ENCODE measurements at regions of chr17 and their contacts with region 1.

Region 1: GRCh38 chr17:41655611-41656351 is 31.4 kb upstream of the KRT17 start:
- DNase-seq: peak; percentile 99
- H3K4me3 ChIP-seq: peak overlapping the region in 2 of 3 donors; percentile 15 to 49
- H3K27ac ChIP-seq: peak overlapping the region; percentile 97 to 100
- H3K4me1 ChIP-seq: peaks cover 47 to 75% of the 10 kb centered on the region in 2 donors
- H3K27me3 ChIP-seq: no peaks in the 10 kb centered on the region
- CTCF ChIP-seq: no peak
- POLR2A ChIP-seq: peak; percentile 35

Region 2: GRCh38 chr17:40915199-40915661 is 740.6 kb before region 1 on chr17:
- intact Hi-C with region 1: loop called (anchors 10 kb)
- DNase-seq: no peak
- H3K4me3 ChIP-seq: no peak overlapping the region
- H3K27ac ChIP-seq: peak overlapping the region; percentile 85 to 86
- H3K4me1 ChIP-seq: no peaks in the 10 kb centered on the region
- H3K27me3 ChIP-seq: no peaks in the 10 kb centered on the region
- CTCF ChIP-seq: no peak
- POLR2A ChIP-seq: no peak

Region 3: DNA sequence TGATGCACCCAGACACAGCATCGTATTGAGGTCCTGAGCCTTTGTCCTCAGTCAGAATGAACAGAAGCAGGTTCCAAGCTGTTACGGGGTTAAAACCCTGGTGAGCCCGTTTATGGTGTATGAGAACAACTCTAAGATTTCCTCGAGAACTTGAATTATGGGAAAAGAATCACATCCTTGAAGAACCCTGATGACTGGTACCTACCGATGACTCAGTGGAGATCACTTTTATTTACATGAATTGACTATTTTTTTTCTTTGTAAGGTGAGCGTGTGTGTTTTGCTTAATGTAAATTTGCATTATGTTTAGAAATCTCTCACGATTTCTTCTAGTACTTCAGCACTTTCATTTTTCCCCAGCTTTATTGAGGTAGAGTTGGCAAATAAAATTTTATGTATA is 492.0 kb before region 1 on chr17:
- intact Hi-C with region 1: no loop called
- DNase-seq: no peak
- H3K4me3 ChIP-seq: no peak overlapping the region
- H3K27ac ChIP-seq: no peak overlapping the region
- H3K4me1 ChIP-seq: no peaks in the 10 kb centered on the region
- H3K27me3 ChIP-seq: no peaks in the 10 kb centered on the region
- CTCF ChIP-seq: no peak
- POLR2A ChIP-seq: no peak

Region 4: DNA sequence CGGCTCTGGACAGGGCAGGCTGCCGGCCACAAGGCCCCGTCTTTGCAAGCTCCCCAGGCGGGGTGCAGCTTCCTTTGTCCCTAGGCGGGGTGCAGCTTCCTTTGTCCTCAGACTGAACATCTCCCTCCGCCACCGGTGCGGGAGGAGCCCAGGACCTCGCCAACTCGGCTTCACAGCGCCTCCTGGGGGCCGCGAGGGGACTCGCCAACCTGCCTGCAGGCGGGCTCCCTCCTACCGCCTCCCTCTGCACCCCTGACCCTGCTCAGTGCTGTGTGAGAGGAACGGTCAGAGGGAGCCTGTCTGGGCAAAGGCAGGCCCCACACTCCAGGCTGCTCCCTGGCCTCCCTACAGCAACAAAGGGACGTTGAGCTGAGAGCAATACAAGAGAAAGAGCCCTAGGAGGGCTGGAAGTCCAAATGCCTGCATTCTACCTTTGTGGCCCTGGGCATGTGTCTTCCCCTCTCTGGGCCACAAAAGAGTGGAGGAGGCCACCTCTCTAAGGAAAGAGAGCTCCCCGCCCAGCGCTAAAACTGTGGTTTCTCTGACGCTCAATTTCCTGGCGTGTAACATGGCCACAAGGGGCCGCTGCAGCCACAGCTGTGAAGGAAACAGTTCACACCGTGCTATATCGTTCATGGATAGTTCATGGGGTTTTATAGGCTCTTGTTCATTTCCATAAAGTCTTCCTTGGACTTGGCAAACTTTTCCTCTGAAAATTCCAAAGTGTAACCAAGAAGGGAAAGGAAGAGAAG is 106.8 kb before region 1 on chr17:
- intact Hi-C with region 1: loop called (anchors 10 kb)
- DNase-seq: peak; percentile 88 to 93
- H3K4me3 ChIP-seq: peak overlapping the region; percentile 10 to 60 (median 40)
- H3K27ac ChIP-seq: peak overlapping the region; percentile 78 to 94
- H3K4me1 ChIP-seq: peaks cover 12% of the 10 kb centered on the region in 2 donors
- H3K27me3 ChIP-seq: no peaks in the 10 kb centered on the region
- CTCF ChIP-seq: peak; percentile 82 to 95 (median 85)
- POLR2A ChIP-seq: no peak

Region 5: DNA sequence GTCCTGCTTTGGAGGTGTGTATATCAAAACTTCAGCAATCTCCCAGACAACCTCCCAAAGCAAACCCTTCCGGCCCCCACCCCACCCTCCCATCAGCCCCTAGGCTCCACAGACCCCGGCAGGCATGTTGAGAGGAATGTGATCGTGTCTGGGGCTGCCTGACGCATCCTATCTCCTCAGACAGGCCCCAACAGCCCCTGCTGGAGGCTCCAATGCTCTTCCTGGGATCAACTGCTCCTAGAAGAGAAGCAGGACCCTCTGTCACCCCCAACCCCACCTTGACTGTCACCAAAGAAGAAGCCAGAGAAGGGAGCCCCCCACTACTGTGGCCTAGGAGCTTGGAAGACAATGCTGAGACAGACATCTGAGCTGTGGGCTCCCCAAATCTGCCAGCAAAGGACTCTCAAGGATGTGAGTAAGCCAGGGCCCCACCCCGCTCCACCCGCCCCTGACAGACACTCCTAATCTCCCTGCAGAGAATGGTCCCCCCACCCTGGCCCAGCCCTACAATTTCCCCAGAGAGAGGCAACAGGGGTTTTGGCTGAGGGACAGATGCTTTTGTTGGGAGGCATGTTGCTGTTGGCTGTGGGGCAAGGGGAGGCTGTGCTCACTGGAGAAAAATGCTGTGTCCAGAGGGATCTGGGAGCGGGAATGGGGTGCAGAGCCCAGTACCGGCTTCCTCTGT is 67.5 kb before region 1 on chr17:
- intact Hi-C with region 1: no loop called
- DNase-seq: no peak
- H3K4me3 ChIP-seq: no peak overlapping the region
- H3K27ac ChIP-seq: peak overlapping the region; percentile 25 to 82
- H3K4me1 ChIP-seq: no peaks in the 10 kb centered on the region
- H3K27me3 ChIP-seq: no peaks in the 10 kb centered on the region
- CTCF ChIP-seq: no peak
- POLR2A ChIP-seq: no peak

Measured in breast epithelium (tissue), 4 donors.